H1 (cell line): ENCODE measurements at regions of chr17 and their contacts with region 1.

Region 1: GRCh38 chr17:39164675-39165143 is 1.3 kb downstream of the ARL5C start:
- DNase-seq: peak; percentile 90 to 91
- H3K4me3 ChIP-seq: peak overlapping the region; percentile 58 to 84 (median 77)
- H3K27ac ChIP-seq: no peak overlapping the region
- H3K4me1 ChIP-seq: peaks cover 0 to 8% (median 6%) of the 10 kb centered on the region in 4 experiments; a peak in 5 of 7 replicates
- H3K27me3 ChIP-seq: peaks cover 14 to 31% (median 25%) of the 10 kb centered on the region in 4 experiments
- CTCF ChIP-seq: peak; percentile 85 to 98 (median 95)
- EP300 ChIP-seq: no peak; a peak in 1 of 3 replicates
- POLR2A ChIP-seq: peak in 1 of 2 experiments; percentile 42; a peak in 1 of 3 replicates
- RAD21 ChIP-seq: peak; percentile 58 to 67

Region 2: DNA sequence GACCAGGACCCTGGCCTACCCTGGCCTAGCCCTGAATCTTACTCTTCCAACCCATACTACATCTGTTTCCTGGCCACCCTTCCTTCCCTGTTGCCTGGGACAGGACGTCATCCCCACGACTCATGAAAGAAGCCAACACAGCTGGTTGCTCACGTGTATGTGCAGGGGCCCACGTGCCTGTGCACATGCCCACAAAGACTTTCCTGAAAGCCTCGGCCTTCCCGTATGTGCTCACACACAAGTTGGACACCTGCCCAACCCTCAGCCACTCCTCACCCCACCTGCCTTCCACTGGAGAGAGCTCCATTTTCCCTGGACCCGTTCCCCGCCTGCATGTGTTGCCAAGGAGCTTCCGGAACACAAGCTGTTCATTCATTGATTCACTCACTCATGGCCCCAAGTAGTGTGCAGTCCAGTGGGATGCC is 20.3 kb before region 1 on chr17:
- CTCF ChIA-PET with region 1: interaction called, 23 read pairs
- POLR2A ChIA-PET with region 1: no interaction called
- DNase-seq: no peak
- H3K4me3 ChIP-seq: no peak overlapping the region
- H3K27ac ChIP-seq: no peak overlapping the region
- H3K4me1 ChIP-seq: 0 out of 7 replicates have a peak, but pooled peaks cover 0 to 4% (median 0%) of the 10 kb centered on the region in 4 experiments
- H3K27me3 ChIP-seq: no peaks in the 10 kb centered on the region
- CTCF ChIP-seq: no peak
- EP300 ChIP-seq: no peak
- POLR2A ChIP-seq: no peak
- RAD21 ChIP-seq: no peak

Region 3: GRCh38 chr17:39194089-39194984 is 29.6 kb after region 1 on chr17:
- CTCF ChIA-PET with region 1: interaction called, 11 read pairs
- POLR2A ChIA-PET with region 1: interaction called, 14 read pairs
- DNase-seq: peak in 1 of 2 experiments; percentile 65
- H3K4me3 ChIP-seq: peak overlapping the region in 2 of 4 experiments; percentile 8 to 89; a peak in 4 of 8 replicates
- H3K27ac ChIP-seq: 0 out of 2 replicates have a peak overlapping the region, but pooled peaks have one; percentile 32
- H3K4me1 ChIP-seq: peaks cover 4 to 27% (median 22%) of the 10 kb centered on the region in 4 experiments
- H3K27me3 ChIP-seq: no peaks in the 10 kb centered on the region
- CTCF ChIP-seq: peak; percentile 34 to 58 (median 57)
- EP300 ChIP-seq: no peak
- POLR2A ChIP-seq: no peak
- RAD21 ChIP-seq: peak in 1 of 2 experiments; percentile 36; a peak in 1 of 4 replicates

Region 4: GRCh38 chr17:39235555-39236449 is 71.1 kb after region 1 on chr17:
- CTCF ChIA-PET with region 1: interaction called, 26 read pairs
- POLR2A ChIA-PET with region 1: interaction called, 3 read pairs
- DNase-seq: peak; percentile 49 to 84
- H3K4me3 ChIP-seq: no peak overlapping the region
- H3K27ac ChIP-seq: no peak overlapping the region
- H3K4me1 ChIP-seq: peaks cover 0 to 14% (median 10%) of the 10 kb centered on the region in 4 experiments; a peak in 6 of 7 replicates
- H3K27me3 ChIP-seq: no peaks in the 10 kb centered on the region
- CTCF ChIP-seq: peak; percentile 94 to 100 (median 99)
- EP300 ChIP-seq: no peak
- POLR2A ChIP-seq: no peak
- RAD21 ChIP-seq: peak; percentile 45; a peak in 3 of 4 replicates

Region 5: DNA sequence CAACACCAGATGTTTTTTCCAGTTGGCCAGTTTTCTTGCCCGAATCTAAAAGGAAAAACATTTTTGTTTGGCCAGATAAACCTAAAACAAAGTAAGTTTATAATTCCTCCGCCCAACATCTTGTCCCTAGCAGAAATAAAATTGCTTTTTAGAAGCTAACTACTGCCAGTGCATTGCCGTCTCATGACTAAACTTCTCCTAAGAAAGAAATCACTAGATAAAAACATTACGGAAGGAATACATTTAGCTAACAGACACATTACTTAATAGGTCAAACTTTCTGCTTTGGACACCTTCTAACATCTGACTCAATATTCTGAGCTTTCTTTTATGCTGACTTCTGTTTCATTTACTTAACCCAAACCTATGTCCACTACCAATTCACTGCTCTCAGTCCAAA is 200.5 kb after region 1 on chr17:
- CTCF ChIA-PET with region 1: no interaction called
- POLR2A ChIA-PET with region 1: no interaction called
- DNase-seq: no peak
- H3K4me3 ChIP-seq: no peak overlapping the region
- H3K27ac ChIP-seq: no peak overlapping the region
- H3K4me1 ChIP-seq: no peaks in the 10 kb centered on the region
- H3K27me3 ChIP-seq: no peaks in the 10 kb centered on the region
- CTCF ChIP-seq: no peak
- EP300 ChIP-seq: no peak
- POLR2A ChIP-seq: no peak
- RAD21 ChIP-seq: no peak